Naive thymus-derived CD4-positive, alpha-beta T cell (primary cell): ENCODE measurements at regions of chr7 and their contacts with region 1.

Region 1: GRCh38 chr7:32905175-32905662 is 13.7 kb upstream of the KBTBD2 start:
- DNase-seq: peak; percentile 37 to 88 (median 82)
- ATAC-seq: peak; percentile 92
- H3K4me3 ChIP-seq: peak overlapping the region; percentile 63
- H3K4me3 Mint-ChIP-seq: peak overlapping the region; percentile 73 to 89 (median 85)
- H3K27ac ChIP-seq: peak overlapping the region; percentile 84
- H3K27ac Mint-ChIP-seq: peak overlapping the region; percentile 86 to 96 (median 94)
- H3K4me1 ChIP-seq: peaks cover 6 to 16% of the 10 kb centered on the region in 2 donors
- H3K4me1 Mint-ChIP-seq: peaks cover 4 to 27% (median 24%) of the 10 kb centered on the region in 7 donors
- H3K27me3 ChIP-seq: no peaks in the 10 kb centered on the region
- H3K27me3 Mint-ChIP-seq: no peaks in the 10 kb centered on the region

Region 2: GRCh38 chr7:31957090-31957720 is 948.0 kb before region 1 on chr7:
- CTCF ChIA-PET with region 1: no interaction called
- POLR2A ChIA-PET with region 1: no interaction called
- intact Hi-C with region 1: no loop called
- DNase-seq: no peak
- ATAC-seq: no peak
- H3K4me3 ChIP-seq: no peak overlapping the region
- H3K4me3 Mint-ChIP-seq: no peak overlapping the region
- H3K27ac ChIP-seq: no peak overlapping the region
- H3K27ac Mint-ChIP-seq: no peak overlapping the region
- H3K4me1 ChIP-seq: no peaks in the 10 kb centered on the region
- H3K4me1 Mint-ChIP-seq: no peaks in the 10 kb centered on the region
- H3K27me3 ChIP-seq: no peaks in the 10 kb centered on the region
- H3K27me3 Mint-ChIP-seq: no peaks in the 10 kb centered on the region

Region 3: GRCh38 chr7:31971049-31971667 is 934.1 kb before region 1 on chr7:
- CTCF ChIA-PET with region 1: no interaction called
- POLR2A ChIA-PET with region 1: no interaction called
- intact Hi-C with region 1: no loop called
- DNase-seq: no peak
- ATAC-seq: no peak
- H3K4me3 ChIP-seq: no peak overlapping the region
- H3K4me3 Mint-ChIP-seq: no peak overlapping the region
- H3K27ac ChIP-seq: no peak overlapping the region
- H3K27ac Mint-ChIP-seq: no peak overlapping the region
- H3K4me1 ChIP-seq: no peaks in the 10 kb centered on the region
- H3K4me1 Mint-ChIP-seq: no peaks in the 10 kb centered on the region
- H3K27me3 ChIP-seq: no peaks in the 10 kb centered on the region
- H3K27me3 Mint-ChIP-seq: no peaks in the 10 kb centered on the region

Region 4: DNA sequence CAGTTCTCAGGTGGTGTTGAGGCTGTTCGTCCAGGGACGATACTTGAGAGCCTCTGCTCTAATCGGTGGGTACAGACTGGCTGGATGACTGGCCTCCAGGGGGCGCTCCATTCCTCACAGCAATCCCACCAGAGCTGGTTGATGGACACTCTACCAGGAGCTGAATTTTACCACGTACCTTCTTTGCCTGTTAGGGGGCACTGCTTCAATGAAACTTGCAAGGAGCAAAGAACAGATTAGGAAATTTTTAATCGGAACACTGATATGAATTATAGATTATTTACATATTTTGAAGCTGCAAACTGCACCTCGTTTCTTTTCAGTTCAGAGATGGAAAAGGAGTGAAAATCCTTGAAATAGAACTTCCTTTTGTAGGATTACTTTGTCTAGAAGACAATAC is 58.5 kb before region 1 on chr7:
- CTCF ChIA-PET with region 1: interaction called, 11 read pairs
- POLR2A ChIA-PET with region 1: no interaction called
- intact Hi-C with region 1: loop called in 1 of 2 experiments (anchors 1 kb)
- DNase-seq: peak; percentile 77 to 89 (median 86)
- ATAC-seq: peak; percentile 100
- H3K4me3 ChIP-seq: no peak overlapping the region
- H3K4me3 Mint-ChIP-seq: peak overlapping the region in 6 of 10 donors; percentile 15 to 42 (median 30)
- H3K27ac ChIP-seq: no peak overlapping the region
- H3K27ac Mint-ChIP-seq: peak overlapping the region in 1 of 9 donors; percentile 33
- H3K4me1 ChIP-seq: peaks cover 7% of the 10 kb centered on the region in 2 donors
- H3K4me1 Mint-ChIP-seq: peaks cover 6 to 10% (median 9%) of the 10 kb centered on the region in 7 donors
- H3K27me3 ChIP-seq: peaks cover 0 to under 1% of the 10 kb centered on the region in 2 donors
- H3K27me3 Mint-ChIP-seq: peaks cover 12 to 44% (median 23%) of the 10 kb centered on the region in 5 donors

Region 5: GRCh38 chr7:33040803-33041516 is 135.7 kb after region 1 on chr7:
- CTCF ChIA-PET with region 1: no interaction called
- POLR2A ChIA-PET with region 1: no interaction called
- intact Hi-C with region 1: loop called in 1 of 2 experiments (anchors 1 kb)
- DNase-seq: peak in 8 of 9 donors; percentile 44 to 90 (median 78)
- ATAC-seq: peak; percentile 99
- H3K4me3 ChIP-seq: peak overlapping the region; percentile 40
- H3K4me3 Mint-ChIP-seq: peak overlapping the region; percentile 71 to 89 (median 84)
- H3K27ac ChIP-seq: peak overlapping the region; percentile 80
- H3K27ac Mint-ChIP-seq: peak overlapping the region; percentile 75 to 95 (median 90)
- H3K4me1 ChIP-seq: peaks cover 3 to 22% of the 10 kb centered on the region in 2 donors
- H3K4me1 Mint-ChIP-seq: peaks cover 18 to 72% (median 65%) of the 10 kb centered on the region in 7 donors
- H3K27me3 ChIP-seq: no peaks in the 10 kb centered on the region
- H3K27me3 Mint-ChIP-seq: no peaks in the 10 kb centered on the region